GM18951 (cell line): ENCODE measurements at regions of chr6 and their contacts with region 1.

Region 1: GRCh38 chr6:142112451-142113061 is 20.2 kb upstream of the GJE1 start:
- POLR2A ChIP-seq: no peak

Region 2: DNA sequence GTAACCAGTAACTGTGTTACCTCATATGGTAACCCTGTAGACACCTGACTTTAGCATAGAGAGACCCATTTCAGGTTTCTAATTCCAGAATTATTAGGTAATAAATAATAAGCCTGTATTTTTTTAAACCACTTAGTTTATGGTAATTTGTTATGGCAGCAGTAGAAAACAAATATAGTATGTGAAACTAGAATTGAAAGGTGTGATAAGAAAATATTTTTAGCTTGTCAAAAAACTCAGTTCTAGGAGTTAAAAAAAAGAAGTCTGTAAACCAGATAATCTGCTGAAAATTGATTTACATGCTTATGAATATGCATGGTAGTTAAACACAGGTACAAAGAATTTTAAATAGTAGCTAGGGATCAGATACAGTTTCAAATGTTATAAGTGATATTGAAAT is 674.9 kb before region 1 on chr6:
- in situ Hi-C with region 1: no loop called
- POLR2A ChIP-seq: no peak

Region 3: GRCh38 chr6:141677598-141678211 is 434.9 kb before region 1 on chr6:
- in situ Hi-C with region 1: loop called (anchors 25 kb)
- POLR2A ChIP-seq: no peak